ENCODE measurements at regions of chr11 and their contacts with region 1.

Region 1: GRCh38 chr11:128848815-128849455 is 18.2 kb downstream of the KCNJ1 start:
- DNase-seq: peak; percentile 60 to 86 (median 84)
- ATAC-seq: peak in 1 of 2 donors; percentile 69
- H3K4me3 ChIP-seq: no peak overlapping the region
- H3K27ac ChIP-seq: no peak overlapping the region
- H3K4me1 ChIP-seq: no peaks in the 10 kb centered on the region
- H3K27me3 ChIP-seq: no peaks in the 10 kb centered on the region

Region 2: DNA sequence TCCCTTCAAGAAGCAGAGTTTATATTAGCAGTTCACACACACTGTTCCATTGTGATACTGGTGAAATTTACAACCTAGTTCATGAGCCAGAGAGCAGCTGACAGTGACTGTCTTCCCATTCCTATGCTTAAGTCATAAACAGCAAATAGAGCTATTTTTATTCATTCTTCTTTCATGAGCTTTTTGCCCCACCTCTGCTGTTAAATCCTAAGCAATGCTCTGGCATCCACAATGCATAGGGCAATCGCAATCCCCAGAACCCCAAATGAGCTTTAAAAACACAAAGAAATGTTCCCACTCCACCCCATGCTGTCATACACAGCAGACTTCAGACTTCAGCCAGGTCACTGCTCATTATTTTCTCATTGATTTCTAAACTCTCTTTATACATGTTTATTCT is 569.1 kb before region 1 on chr11:
- intact Hi-C with region 1: loop called in 1 of 4 experiments (anchors 10 kb)
- DNase-seq: no peak
- ATAC-seq: no peak
- H3K4me3 ChIP-seq: no peak overlapping the region
- H3K27ac ChIP-seq: no peak overlapping the region
- H3K4me1 ChIP-seq: no peaks in the 10 kb centered on the region
- H3K27me3 ChIP-seq: no peaks in the 10 kb centered on the region

Region 3: GRCh38 chr11:128506999-128507611 is 341.8 kb before region 1 on chr11:
- intact Hi-C with region 1: no loop called
- DNase-seq: peak; percentile 93 to 96 (median 93)
- ATAC-seq: peak; percentile 93
- H3K4me3 ChIP-seq: peak overlapping the region; percentile 49
- H3K27ac ChIP-seq: peak overlapping the region; percentile 97
- H3K4me1 ChIP-seq: peaks cover 38% of the 10 kb centered on the region
- H3K27me3 ChIP-seq: no peaks in the 10 kb centered on the region

Region 4: GRCh38 chr11:128776424-128777284 is 72.3 kb before region 1 on chr11:
- intact Hi-C with region 1: loop called in 1 of 4 experiments (anchors 5 kb)
- DNase-seq: peak; percentile 77 to 92 (median 92)
- ATAC-seq: peak; percentile 77
- H3K4me3 ChIP-seq: no peak overlapping the region
- H3K27ac ChIP-seq: no peak overlapping the region
- H3K4me1 ChIP-seq: peaks cover 11% of the 10 kb centered on the region
- H3K27me3 ChIP-seq: no peaks in the 10 kb centered on the region

Region 5: GRCh38 chr11:128981254-128981653 is 132.3 kb after region 1 on chr11:
- intact Hi-C with region 1: no loop called
- DNase-seq: no peak
- ATAC-seq: no peak
- H3K4me3 ChIP-seq: no peak overlapping the region
- H3K27ac ChIP-seq: no peak overlapping the region
- H3K4me1 ChIP-seq: no peaks in the 10 kb centered on the region
- H3K27me3 ChIP-seq: no peaks in the 10 kb centered on the region